A673 (cell line): ENCODE measurements at regions of chr14 and their contacts with region 1.

Region 1: DNA sequence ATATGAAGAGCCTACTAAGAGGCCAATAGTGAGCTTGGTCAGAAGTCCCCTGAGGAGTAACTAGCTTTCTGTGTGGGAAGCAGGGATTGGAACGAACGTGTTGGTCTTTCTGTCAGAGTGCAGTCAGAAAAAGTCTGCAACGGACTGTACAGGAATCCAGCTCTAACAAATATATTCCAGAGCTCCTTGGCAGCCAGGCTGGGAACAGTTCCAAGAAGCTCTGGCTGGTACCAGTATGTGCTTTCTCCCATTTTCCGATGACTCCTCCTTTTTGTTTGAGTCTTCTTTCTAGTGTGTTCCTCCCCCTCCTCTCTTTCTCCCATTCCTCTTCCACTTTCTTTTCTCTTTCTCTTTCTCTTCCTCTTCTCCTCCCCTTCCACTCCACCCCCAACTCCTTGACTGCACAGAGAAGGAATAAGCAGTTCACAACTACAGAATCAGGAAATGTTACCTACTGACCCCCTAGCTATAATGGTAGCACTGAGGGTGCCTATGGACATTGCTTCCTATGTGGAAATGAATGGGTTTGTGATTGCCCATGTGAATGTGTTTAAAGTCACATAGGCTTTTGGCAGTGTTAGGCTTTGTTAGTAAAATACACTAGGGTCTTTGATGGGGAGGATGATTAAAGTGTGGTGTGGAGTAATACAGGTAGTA is 59.9 kb downstream of the TTLL5 start:
- DNase-seq: peak; percentile 39
- H3K4me3 ChIP-seq: no peak overlapping the region
- H3K27ac ChIP-seq: no peak overlapping the region
- H3K4me1 ChIP-seq: peaks cover 11% of the 10 kb centered on the region
- H3K27me3 ChIP-seq: no peaks in the 10 kb centered on the region
- CTCF ChIP-seq: no peak

Region 2: GRCh38 chr14:75514673-75515628 is 206.0 kb before region 1 on chr14:
- CTCF ChIA-PET with region 1: no interaction called
- POLR2A ChIA-PET with region 1: no interaction called
- intact Hi-C with region 1: no loop called
- DNase-seq: no peak
- H3K4me3 ChIP-seq: no peak overlapping the region
- H3K27ac ChIP-seq: no peak overlapping the region
- H3K4me1 ChIP-seq: no peaks in the 10 kb centered on the region
- H3K27me3 ChIP-seq: no peaks in the 10 kb centered on the region
- CTCF ChIP-seq: 0 out of 2 replicates have a peak, but pooled peaks have one; percentile 17

Region 3: DNA sequence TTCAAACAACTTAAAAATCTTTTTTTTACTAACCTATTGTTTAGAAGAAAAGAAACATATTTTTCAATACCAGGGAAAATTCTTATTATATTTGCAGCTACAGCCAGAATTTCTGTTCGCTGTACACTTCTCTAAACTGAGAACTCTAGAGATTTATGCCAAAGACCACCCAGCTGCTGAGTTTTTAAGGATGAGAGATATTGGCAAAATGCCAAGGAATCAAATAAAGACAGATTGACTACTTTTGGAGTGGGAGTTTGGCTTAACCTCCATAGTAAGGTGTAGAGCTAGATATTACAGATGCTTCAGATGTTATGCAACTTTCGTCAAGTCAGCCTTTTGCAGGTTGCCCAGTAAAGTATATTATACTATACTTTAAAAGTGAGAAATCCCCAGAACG is 11.9 kb after region 1 on chr14:
- CTCF ChIA-PET with region 1: no interaction called
- POLR2A ChIA-PET with region 1: interaction called, 10 read pairs
- intact Hi-C with region 1: no loop called
- DNase-seq: no peak
- H3K4me3 ChIP-seq: no peak overlapping the region
- H3K27ac ChIP-seq: no peak overlapping the region
- H3K4me1 ChIP-seq: no peaks in the 10 kb centered on the region
- H3K27me3 ChIP-seq: no peaks in the 10 kb centered on the region
- CTCF ChIP-seq: no peak